CD4-positive, alpha-beta T cell (primary cell): ENCODE measurements at regions of chr12 and their contacts with region 1.

Region 1: GRCh38 chr12:51025836-51026638 is at the start of gene SLC11A2:
- DNase-seq: peak; percentile 80 to 96 (median 88)
- ATAC-seq: peak; percentile 86
- H3K4me3 ChIP-seq: peak within 1 kb of the TSS; percentile 83
- H3K4me3 Mint-ChIP-seq: peak within 1 kb of the TSS; percentile 97
- H3K27ac ChIP-seq: peak within 1 kb of the TSS; percentile 78 to 83
- H3K27ac Mint-ChIP-seq: peak within 1 kb of the TSS; percentile 92
- H3K4me1 ChIP-seq: peaks cover 57% of the 10 kb centered on the region
- H3K4me1 Mint-ChIP-seq: peaks cover 63% of the 10 kb centered on the region
- H3K27me3 ChIP-seq: no peaks in the 10 kb centered on the region
- H3K27me3 Mint-ChIP-seq: no peaks in the 10 kb centered on the region
- CTCF ChIP-seq: no peak
- total RNA-seq, gene SLC11A2: 43.6 to 47.7 TPM

Region 2: GRCh38 chr12:51009056-51009440 is 17.0 kb before region 1 on chr12:
- CTCF ChIA-PET with region 1: interaction called, 10 read pairs
- POLR2A ChIA-PET with region 1: interaction called, 34 read pairs
- intact Hi-C with region 1: loop called (anchors 1 to 2 kb)
- DNase-seq: peak; percentile 35 to 81 (median 55)
- ATAC-seq: peak; percentile 100
- H3K4me3 ChIP-seq: no peak overlapping the region
- H3K4me3 Mint-ChIP-seq: peak overlapping the region; percentile 62
- H3K27ac ChIP-seq: peak overlapping the region; percentile 14 to 49
- H3K27ac Mint-ChIP-seq: peak overlapping the region; percentile 81
- H3K4me1 ChIP-seq: peaks cover 14% of the 10 kb centered on the region
- H3K4me1 Mint-ChIP-seq: peaks cover 48% of the 10 kb centered on the region
- H3K27me3 ChIP-seq: no peaks in the 10 kb centered on the region
- H3K27me3 Mint-ChIP-seq: no peaks in the 10 kb centered on the region
- CTCF ChIP-seq: no peak

Region 3: GRCh38 chr12:51083126-51083833 is 57.2 kb after region 1 on chr12 and contains the start of gene CSRNP2:
- CTCF ChIA-PET with region 1: interaction called, 3 read pairs
- POLR2A ChIA-PET with region 1: interaction called, 14 read pairs
- intact Hi-C with region 1: no loop called
- DNase-seq: peak; percentile 92 to 97 (median 94)
- ATAC-seq: peak; percentile 99
- H3K4me3 ChIP-seq: peak within 1 kb of the TSS; percentile 84
- H3K4me3 Mint-ChIP-seq: peak within 1 kb of the TSS; percentile 95
- H3K27ac ChIP-seq: peak within 1 kb of the TSS; percentile 40 to 71
- H3K27ac Mint-ChIP-seq: peak within 1 kb of the TSS; percentile 87
- H3K4me1 ChIP-seq: peaks cover 20% of the 10 kb centered on the region
- H3K4me1 Mint-ChIP-seq: peaks cover 41% of the 10 kb centered on the region
- H3K27me3 ChIP-seq: no peaks in the 10 kb centered on the region
- H3K27me3 Mint-ChIP-seq: no peaks in the 10 kb centered on the region
- CTCF ChIP-seq: peak; percentile 34
- total RNA-seq, gene CSRNP2: 14.4 to 16.5 TPM

Region 4: DNA sequence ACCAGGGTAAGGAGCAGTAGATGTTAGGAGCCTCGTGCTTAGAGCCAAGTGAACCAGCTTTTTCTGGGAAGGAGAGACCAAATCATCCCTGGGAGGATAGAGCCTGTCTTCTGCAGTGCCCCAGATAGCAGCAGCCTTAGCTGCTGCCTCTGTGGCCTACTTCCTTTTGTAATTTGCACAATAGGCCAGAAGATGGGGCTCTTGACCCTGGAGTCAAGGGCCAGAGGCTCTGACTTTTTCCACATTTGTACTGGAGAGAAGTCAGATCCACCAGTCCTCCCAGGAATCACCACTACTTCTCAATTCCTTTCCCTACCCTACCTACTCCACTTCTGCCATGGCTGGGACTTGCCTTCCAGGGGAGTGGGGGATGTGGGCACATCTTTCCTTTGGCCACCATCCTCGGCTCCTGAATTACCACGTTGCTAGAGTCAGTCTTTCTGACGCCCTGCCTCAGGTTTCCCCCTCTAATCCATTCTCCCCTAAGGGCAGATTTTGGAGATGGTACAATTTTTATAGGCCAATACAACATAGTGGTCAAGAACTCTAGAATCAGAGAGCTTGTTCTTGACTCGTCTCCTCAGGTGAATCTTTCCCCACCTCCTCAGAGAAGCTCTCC is 395.3 kb after region 1 on chr12:
- CTCF ChIA-PET with region 1: no interaction called
- POLR2A ChIA-PET with region 1: no interaction called
- intact Hi-C with region 1: no loop called
- DNase-seq: peak in 12 of 14 experiments; percentile 8 to 73 (median 20)
- ATAC-seq: peak; percentile 35
- H3K4me3 ChIP-seq: no peak overlapping the region
- H3K4me3 Mint-ChIP-seq: no peak overlapping the region
- H3K27ac ChIP-seq: no peak overlapping the region
- H3K27ac Mint-ChIP-seq: no peak overlapping the region
- H3K4me1 ChIP-seq: peaks cover 18% of the 10 kb centered on the region
- H3K4me1 Mint-ChIP-seq: peaks cover 32% of the 10 kb centered on the region
- H3K27me3 ChIP-seq: no peaks in the 10 kb centered on the region
- H3K27me3 Mint-ChIP-seq: no peaks in the 10 kb centered on the region
- CTCF ChIP-seq: peak; percentile 35